ENCODE measurements at regions of chr20 and their contacts with region 1.

Region 1: GRCh38 chr20:51306503-51307358 is 235.8 kb downstream of the NFATC2 start:
- ATAC-seq: peak; percentile 97 to 100 (median 100)
- H3K4me3 ChIP-seq: no peak overlapping the region
- H3K27ac ChIP-seq: no peak overlapping the region
- H3K4me1 ChIP-seq: peaks cover 6 to 16% of the 10 kb centered on the region in 2 donors

Region 2: GRCh38 chr20:50992733-50993457 is 313.8 kb before region 1 on chr20:
- in situ Hi-C with region 1: loop called (anchors 10 to 25 kb)
- ATAC-seq: peak; percentile 76 to 98 (median 90)
- H3K4me3 ChIP-seq: no peak overlapping the region
- H3K27ac ChIP-seq: no peak overlapping the region
- H3K4me1 ChIP-seq: peaks cover 18 to 21% of the 10 kb centered on the region in 2 donors

Region 3: GRCh38 chr20:51135926-51136715 is 170.6 kb before region 1 on chr20:
- in situ Hi-C with region 1: no loop called
- ATAC-seq: no peak
- H3K4me3 ChIP-seq: no peak overlapping the region
- H3K27ac ChIP-seq: no peak overlapping the region
- H3K4me1 ChIP-seq: no peaks in the 10 kb centered on the region

Measured in motor neuron (in vitro differentiated cells).